ENCODE measurements at regions of chr2 and their contacts with region 1.

Region 1: DNA sequence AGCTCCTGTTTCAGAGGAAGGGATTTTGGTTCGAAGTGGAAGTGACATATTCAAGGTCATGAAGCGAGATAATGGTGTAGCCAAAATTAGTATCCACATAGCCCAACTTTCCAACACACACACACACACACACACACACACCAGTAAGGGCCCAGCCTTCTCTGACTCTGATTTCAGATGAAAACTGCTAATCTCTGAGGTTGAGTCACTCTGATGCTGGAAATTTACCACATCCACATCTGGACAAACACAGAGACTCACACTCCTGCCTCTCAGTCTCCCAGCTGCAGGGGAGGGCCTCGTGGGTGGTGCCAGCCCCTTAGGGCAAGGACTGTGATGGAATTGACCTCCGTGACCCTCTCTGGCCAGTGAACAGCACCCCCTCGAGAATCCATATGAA is 29.0 kb upstream of the SLC35F6 start:
- DNase-seq: peak; percentile 80
- H3K4me3 ChIP-seq: no peak overlapping the region
- H3K27ac ChIP-seq: no peak overlapping the region
- H3K4me1 ChIP-seq: peaks cover 0 to 18% of the 10 kb centered on the region in 2 experiments; a peak in 1 of 4 replicates
- H3K27me3 ChIP-seq: no peaks in the 10 kb centered on the region
- CTCF ChIP-seq: no peak
- EP300 ChIP-seq: no peak
- RAD21 ChIP-seq: peak; percentile 14; the same call in 1 of the 2 replicates

Region 2: GRCh38 chr2:26720322-26721166 is 14.6 kb before region 1 on chr2:
- CTCF ChIA-PET with region 1: interaction called, 7 read pairs
- POLR2A ChIA-PET with region 1: interaction called, 20 read pairs
- DNase-seq: peak; percentile 92
- H3K4me3 ChIP-seq: no peak overlapping the region
- H3K27ac ChIP-seq: peak overlapping the region; percentile 8 to 30; a peak in 1 of 4 replicates
- H3K4me1 ChIP-seq: peaks cover 25 to 62% of the 10 kb centered on the region in 2 experiments; a peak in 3 of 4 replicates
- H3K27me3 ChIP-seq: no peaks in the 10 kb centered on the region
- CTCF ChIP-seq: no peak
- EP300 ChIP-seq: peak in 1 of 2 experiments; percentile 76; a peak in 2 of 4 replicates
- RAD21 ChIP-seq: peak; percentile 21; the same call in 1 of the 2 replicates